K562 (cell line): ENCODE measurements at regions of chr6 and their contacts with region 1.

Region 1: DNA sequence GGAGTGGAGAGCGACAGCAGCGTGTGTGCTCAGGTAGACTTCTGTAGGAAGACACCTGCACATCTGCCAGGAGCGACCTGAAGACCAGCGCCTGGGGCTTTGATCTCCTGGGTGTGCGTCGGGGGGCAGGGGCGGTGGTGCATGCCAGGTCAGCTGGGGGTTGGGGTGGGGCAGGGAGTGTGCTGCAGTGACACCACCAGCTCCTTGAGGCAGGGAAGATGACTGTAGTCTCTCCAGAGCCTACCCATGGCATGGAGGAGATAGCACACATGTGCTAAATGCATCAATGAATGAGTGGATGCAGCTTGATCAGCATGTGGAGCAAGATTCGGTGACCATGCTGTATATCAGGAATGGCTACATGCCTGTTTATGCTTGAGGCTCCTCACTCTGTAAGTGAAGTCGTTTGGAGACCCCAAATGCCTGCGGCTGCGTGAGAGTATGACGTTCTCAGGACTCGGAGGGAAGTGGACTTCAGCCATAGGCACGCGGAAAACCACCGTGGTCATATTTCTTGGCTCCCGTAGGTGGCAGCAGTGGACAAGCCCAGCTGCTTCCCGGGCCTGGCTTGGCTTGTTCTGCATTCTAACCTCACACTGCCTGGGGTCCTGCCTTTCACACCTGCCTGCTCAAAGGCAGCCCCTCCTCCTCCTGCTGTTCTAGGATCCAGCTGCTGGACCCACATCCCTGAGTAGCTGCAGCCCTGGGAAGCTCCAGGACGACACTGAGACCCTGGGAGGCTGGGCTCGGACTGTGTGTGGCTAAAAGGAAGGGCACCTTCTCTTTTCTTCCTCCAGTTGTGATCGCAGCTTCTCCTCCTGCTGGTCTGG is 39.4 kb upstream of the KCNK16 start:
- DNase-seq: peak; percentile 75 to 82 (median 80)
- ATAC-seq: peak; percentile 97
- H3K4me3 ChIP-seq: no peak overlapping the region
- H3K27ac ChIP-seq: no peak overlapping the region
- H3K4me1 ChIP-seq: no peaks in the 10 kb centered on the region
- H3K27me3 ChIP-seq: peaks cover 8 to 56% of the 10 kb centered on the region in 2 experiments; a peak in 4 of 5 replicates
- CTCF ChIP-seq: peak; percentile 84 to 88 (median 86)
- EP300 ChIP-seq: no peak
- POLR2A ChIP-seq: no peak
- RAD21 ChIP-seq: peak; percentile 52 to 82

Region 2: DNA sequence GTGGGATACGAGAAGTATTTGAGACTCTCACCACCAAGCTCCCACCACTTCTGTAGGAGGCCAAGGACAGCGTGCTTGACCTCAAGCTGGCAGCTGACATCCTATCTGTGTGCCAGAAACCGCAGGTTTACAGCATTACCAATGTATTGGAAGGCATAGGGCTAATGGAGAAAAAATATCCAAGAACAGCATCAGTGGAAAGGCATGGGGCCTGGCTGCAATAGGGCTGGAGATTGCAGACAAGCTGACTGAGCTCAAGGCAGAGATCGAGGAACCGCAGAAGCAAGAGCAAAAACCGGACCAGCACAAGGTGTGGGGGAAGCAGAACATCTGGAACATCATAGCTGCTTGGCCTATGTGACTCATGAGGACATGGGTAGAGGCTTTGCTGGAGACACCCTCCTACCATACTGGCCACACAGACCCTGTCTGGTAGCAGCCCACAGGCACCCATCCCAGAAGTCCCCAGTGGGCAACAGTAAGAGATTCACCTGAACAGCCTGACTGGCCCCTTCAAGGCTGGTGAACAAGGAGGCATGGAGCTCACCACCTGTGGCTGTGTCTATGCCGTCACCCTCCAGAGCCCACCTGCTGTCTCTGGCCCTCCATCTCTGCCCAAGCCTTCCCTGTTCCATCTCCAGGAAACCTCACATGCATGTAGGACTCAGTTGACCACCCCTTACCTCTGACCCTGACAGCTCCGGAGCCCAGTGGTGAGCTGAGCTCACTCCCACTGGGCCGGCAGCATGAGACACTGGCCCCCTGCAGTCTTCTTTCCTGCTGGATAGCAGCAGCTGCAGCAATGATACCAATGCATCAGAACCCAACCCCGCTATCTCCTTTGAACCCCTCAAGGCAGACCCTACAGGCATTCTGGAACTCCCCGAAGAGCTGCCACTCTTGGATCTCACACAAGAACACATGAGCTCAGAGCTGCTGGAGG is 192.3 kb after region 1 on chr6:
- CTCF ChIA-PET with region 1: no interaction called
- POLR2A ChIA-PET with region 1: no interaction called
- in situ Hi-C with region 1: no loop called
- intact Hi-C with region 1: no loop called
- DNase-seq: no peak
- ATAC-seq: no peak
- H3K4me3 ChIP-seq: no peak overlapping the region
- H3K27ac ChIP-seq: no peak overlapping the region
- H3K4me1 ChIP-seq: no peaks in the 10 kb centered on the region
- H3K27me3 ChIP-seq: peaks cover 0 to 13% of the 10 kb centered on the region in 2 experiments; a peak in 3 of 5 replicates
- CTCF ChIP-seq: no peak
- EP300 ChIP-seq: no peak
- POLR2A ChIP-seq: no peak
- RAD21 ChIP-seq: no peak

Region 3: GRCh38 chr6:39870950-39871349 is 509.1 kb after region 1 on chr6:
- CTCF ChIA-PET with region 1: no interaction called
- POLR2A ChIA-PET with region 1: no interaction called
- in situ Hi-C with region 1: loop called (anchors 10 kb)
- intact Hi-C with region 1: no loop called
- DNase-seq: peak in 2 of 4 experiments; percentile 23
- ATAC-seq: peak; percentile 61
- H3K4me3 ChIP-seq: no peak overlapping the region
- H3K27ac ChIP-seq: no peak overlapping the region
- H3K4me1 ChIP-seq: no peaks in the 10 kb centered on the region
- H3K27me3 ChIP-seq: peaks cover 0 to 4% of the 10 kb centered on the region in 2 experiments; a peak in 2 of 5 replicates
- CTCF ChIP-seq: peak; percentile 41 to 50 (median 48)
- EP300 ChIP-seq: no peak
- POLR2A ChIP-seq: no peak
- RAD21 ChIP-seq: peak; percentile 33 to 65; a peak in 3 of 4 replicates

Region 4: DNA sequence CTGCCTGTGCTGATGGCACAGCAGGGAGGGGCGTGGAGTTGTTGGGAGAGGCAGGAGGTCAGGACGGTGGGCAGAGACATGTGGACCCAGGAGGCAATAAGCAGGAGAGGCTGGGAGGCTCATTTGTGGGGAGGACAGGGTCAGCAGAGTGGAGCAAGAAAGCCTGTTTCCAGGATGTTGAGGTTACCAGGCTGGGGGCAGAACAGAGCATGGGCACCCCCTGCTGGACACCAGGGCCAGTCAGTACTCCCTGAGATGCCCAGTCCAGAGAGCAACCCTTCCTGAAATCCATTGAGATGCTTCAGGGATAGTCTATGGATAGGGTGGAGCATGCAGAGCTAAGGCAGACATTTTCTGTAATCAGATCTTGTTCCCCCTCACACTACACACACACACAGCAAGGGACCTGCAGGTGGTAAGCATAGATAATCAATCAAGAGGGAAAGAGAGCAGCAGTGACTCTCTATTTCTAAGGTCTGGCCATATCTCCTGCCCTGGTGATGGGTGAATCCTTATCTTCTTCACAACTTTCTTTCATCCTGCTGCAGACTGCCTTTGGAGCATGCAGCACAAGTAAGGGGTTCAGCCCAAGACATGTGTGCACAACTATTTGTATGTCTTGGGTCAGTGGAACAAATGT is 530.7 kb after region 1 on chr6:
- CTCF ChIA-PET with region 1: no interaction called
- POLR2A ChIA-PET with region 1: no interaction called
- in situ Hi-C with region 1: no loop called
- intact Hi-C with region 1: loop called (anchors 5 kb)
- DNase-seq: peak; percentile 56 to 70 (median 62)
- ATAC-seq: peak; percentile 89
- H3K4me3 ChIP-seq: no peak overlapping the region
- H3K27ac ChIP-seq: no peak overlapping the region
- H3K4me1 ChIP-seq: no peaks in the 10 kb centered on the region
- H3K27me3 ChIP-seq: peaks cover 11 to 19% of the 10 kb centered on the region in 2 experiments; a peak in 4 of 5 replicates
- CTCF ChIP-seq: peak; percentile 57 to 76 (median 70)
- EP300 ChIP-seq: no peak
- POLR2A ChIP-seq: no peak
- RAD21 ChIP-seq: peak; percentile 53 to 73

Region 5: DNA sequence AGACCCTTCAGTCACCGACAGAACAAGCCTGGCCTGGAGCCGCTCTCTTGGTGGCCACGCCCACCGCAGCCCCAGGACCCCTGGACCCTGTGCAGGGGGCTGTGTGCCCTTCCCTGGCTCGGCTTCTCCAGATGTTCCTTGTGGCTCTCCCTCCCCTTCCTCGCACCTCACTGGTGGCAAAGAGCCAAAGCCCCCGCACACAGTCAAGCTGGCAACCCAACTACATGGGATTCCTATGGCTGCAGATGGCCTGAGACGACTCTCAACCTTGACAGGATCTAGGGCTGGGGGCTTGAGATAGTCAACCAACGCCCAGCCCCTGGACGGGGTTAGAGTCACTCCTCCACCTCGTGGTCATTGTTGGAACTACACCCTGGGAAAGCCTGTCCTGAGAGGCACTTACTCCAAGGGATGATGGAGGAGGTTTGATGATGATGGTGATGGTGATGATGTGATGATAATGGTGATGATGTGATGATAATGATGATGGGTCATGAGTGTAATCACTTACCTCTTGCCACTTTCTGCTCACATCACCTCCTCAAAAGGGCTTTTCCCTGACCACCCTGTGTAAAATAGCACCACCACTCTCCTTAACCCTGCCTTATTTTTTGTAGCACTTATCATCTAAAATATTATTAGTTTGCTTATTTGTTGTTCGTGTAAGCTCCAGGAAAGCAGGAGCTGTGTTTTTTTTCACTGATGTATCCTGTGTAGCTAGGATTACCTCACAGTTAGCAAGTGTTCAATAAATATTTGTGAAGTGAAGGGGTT is 946.8 kb after region 1 on chr6:
- CTCF ChIA-PET with region 1: no interaction called
- POLR2A ChIA-PET with region 1: interaction called, 3 read pairs
- in situ Hi-C with region 1: loop called (anchors 25 kb)
- intact Hi-C with region 1: no loop called
- DNase-seq: peak; percentile 77 to 91 (median 84)
- ATAC-seq: peak; percentile 97
- H3K4me3 ChIP-seq: no peak overlapping the region
- H3K27ac ChIP-seq: no peak overlapping the region
- H3K4me1 ChIP-seq: peaks cover 0 to 6% of the 10 kb centered on the region in 2 experiments; a peak in 2 of 5 replicates
- H3K27me3 ChIP-seq: peaks cover 0 to 31% of the 10 kb centered on the region in 2 experiments; a peak in 3 of 5 replicates
- CTCF ChIP-seq: peak; percentile 79 to 96 (median 89)
- EP300 ChIP-seq: no peak
- POLR2A ChIP-seq: no peak
- RAD21 ChIP-seq: peak; percentile 90 to 91

Region 6: DNA sequence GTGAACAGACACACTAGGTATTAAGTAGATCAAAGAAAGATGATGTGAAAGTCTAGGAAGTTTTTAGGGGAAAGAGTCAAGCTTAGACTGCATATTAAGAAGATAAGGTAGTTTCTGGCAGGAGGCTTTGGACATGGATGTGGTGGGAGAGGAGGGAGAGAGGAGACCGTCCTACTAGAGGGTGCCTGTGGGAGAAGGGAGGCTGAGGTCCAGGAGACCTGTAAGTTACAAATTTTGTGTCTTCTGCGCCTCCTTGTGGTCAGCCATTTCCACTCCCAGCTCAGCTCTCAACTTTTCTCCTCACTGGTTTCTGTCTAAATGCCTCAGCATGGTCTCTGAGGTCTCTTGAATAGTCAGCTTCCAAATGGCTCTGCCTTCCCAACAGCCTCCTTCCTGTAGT is 1483.7 kb after region 1 on chr6:
- CTCF ChIA-PET with region 1: no interaction called
- POLR2A ChIA-PET with region 1: no interaction called
- in situ Hi-C with region 1: loop called (anchors 25 kb)
- intact Hi-C with region 1: no loop called
- DNase-seq: peak in 3 of 4 experiments; percentile 28 to 66 (median 48)
- ATAC-seq: peak; percentile 88
- H3K4me3 ChIP-seq: no peak overlapping the region
- H3K27ac ChIP-seq: no peak overlapping the region
- H3K4me1 ChIP-seq: no peaks in the 10 kb centered on the region
- H3K27me3 ChIP-seq: 0 out of 5 replicates have a peak, but pooled peaks cover 0 to 4% of the 10 kb centered on the region in 2 experiments
- CTCF ChIP-seq: peak; percentile 65 to 79 (median 78)
- EP300 ChIP-seq: no peak
- POLR2A ChIP-seq: no peak
- RAD21 ChIP-seq: peak; percentile 62 to 74

Region 7: GRCh38 chr6:41027799-41028628 is 1666.1 kb after region 1 on chr6:
- CTCF ChIA-PET with region 1: no interaction called
- POLR2A ChIA-PET with region 1: interaction called, 4 read pairs
- in situ Hi-C with region 1: loop called (anchors 25 kb)
- intact Hi-C with region 1: no loop called
- DNase-seq: peak; percentile 85 to 95 (median 93)
- ATAC-seq: peak; percentile 98
- H3K4me3 ChIP-seq: peak overlapping the region; percentile 10
- H3K27ac ChIP-seq: no peak overlapping the region
- H3K4me1 ChIP-seq: peaks cover 0 to 13% of the 10 kb centered on the region in 2 experiments; a peak in 4 of 5 replicates
- H3K27me3 ChIP-seq: peaks cover 13 to 14% of the 10 kb centered on the region in 2 experiments; a peak in 4 of 5 replicates
- CTCF ChIP-seq: peak; percentile 98
- EP300 ChIP-seq: no peak
- POLR2A ChIP-seq: no peak
- RAD21 ChIP-seq: peak; percentile 95